Cardiac septum (tissue), 1 donor: ENCODE measurements at regions of chr2 and their contacts with region 1.

Region 1: DNA sequence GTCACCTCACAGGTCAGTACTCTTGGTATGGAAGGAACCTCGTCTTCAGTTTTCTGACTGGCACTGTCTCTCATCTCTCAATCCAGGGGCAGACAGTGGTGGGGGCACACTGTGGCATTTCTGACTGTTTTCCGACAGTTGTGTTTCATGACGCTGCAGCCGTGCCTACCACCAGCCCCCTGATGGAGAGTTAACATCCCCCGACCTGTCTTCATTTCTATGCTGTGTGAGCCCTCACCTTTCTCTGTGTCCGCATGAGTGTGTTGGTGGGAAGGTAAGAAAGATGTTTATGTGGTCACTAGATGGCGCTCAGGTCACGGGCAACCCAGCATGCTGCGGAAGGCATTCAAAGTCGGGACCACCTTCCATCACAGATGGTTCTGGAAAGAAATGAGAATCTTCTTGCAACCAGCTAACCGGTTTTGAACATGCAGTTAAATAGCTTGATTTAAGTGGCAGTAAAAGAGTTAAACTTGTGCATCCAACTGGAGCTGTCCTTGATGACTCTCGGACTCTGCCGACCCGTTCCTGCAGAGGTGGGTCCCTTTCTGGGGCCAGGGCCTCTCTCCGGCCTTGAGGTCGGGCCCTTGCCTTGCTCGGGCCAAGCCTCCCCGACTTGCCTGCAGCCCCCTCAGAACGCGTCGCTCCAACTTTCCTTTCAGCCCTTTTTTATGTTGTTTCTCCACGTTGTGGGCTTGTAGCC is 92.4 kb downstream of the DYSF start:
- DNase-seq: peak; percentile 74

Region 2: GRCh38 chr2:72579591-72580180 is 1034.0 kb after region 1 on chr2:
- intact Hi-C with region 1: loop called (anchors 10 kb)
- DNase-seq: no peak

Region 3: GRCh38 chr2:72745679-72746368 is 1200.1 kb after region 1 on chr2:
- intact Hi-C with region 1: loop called (anchors 10 kb)
- DNase-seq: no peak